Heart right ventricle (tissue), 16 donors: ENCODE measurements at regions of chr13 and their contacts with region 1.

Region 1: GRCh38 chr13:20828539-20829364 is 55.0 kb upstream of the EEF1AKMT1 start:
- DNase-seq: peak in 1 of 2 donors; percentile 52
- ATAC-seq: peak in 6 of 8 donors; percentile 24 to 68 (median 51)
- H3K4me3 ChIP-seq: peak overlapping the region in 7 of 10 donors; percentile 14 to 43 (median 33)
- H3K27ac ChIP-seq: peak overlapping the region in 9 of 10 donors; percentile 1 to 82 (median 66)
- H3K4me1 ChIP-seq: peaks cover 0 to 22% (median 10%) of the 10 kb centered on the region in 9 donors
- H3K27me3 ChIP-seq: no peaks in the 10 kb centered on the region
- CTCF ChIP-seq: peak; percentile 55 to 87 (median 79)

Region 2: DNA sequence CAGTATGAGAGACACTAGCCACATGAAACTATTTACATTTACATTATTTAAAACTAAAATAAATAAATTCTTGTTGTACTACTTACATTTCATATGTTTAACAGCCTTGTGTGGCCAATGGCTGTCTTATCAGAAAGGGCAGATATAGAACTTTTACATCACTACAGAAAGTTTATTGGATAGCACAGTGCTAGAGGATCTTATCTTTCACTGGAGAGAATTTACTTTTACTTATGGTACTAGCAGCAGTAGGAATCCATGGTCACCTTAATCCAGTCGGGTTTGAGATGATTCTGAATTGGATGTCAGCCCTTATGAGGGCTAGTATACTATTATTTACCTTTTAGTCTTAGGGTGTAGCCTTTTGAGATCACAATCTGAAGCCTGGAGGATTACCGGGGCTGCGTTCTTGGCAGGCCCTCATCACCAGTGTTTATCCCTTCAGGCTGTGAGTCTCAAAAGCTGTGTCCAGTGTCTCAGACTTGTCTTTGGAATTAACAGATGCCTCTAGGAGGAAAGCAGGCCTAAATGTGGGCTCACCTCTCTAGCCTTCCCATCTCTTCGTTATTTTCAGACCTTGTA is 240.1 kb before region 1 on chr13:
- intact Hi-C with region 1: no loop called
- DNase-seq: no peak
- ATAC-seq: no peak
- H3K4me3 ChIP-seq: no peak overlapping the region
- H3K27ac ChIP-seq: no peak overlapping the region
- H3K4me1 ChIP-seq: no peaks in the 10 kb centered on the region
- H3K27me3 ChIP-seq: no peaks in the 10 kb centered on the region
- CTCF ChIP-seq: no peak

Region 3: GRCh38 chr13:20760872-20761271 is 67.9 kb before region 1 on chr13:
- intact Hi-C with region 1: no loop called
- DNase-seq: no peak
- ATAC-seq: no peak
- H3K4me3 ChIP-seq: no peak overlapping the region
- H3K27ac ChIP-seq: no peak overlapping the region
- H3K4me1 ChIP-seq: no peaks in the 10 kb centered on the region
- H3K27me3 ChIP-seq: no peaks in the 10 kb centered on the region
- CTCF ChIP-seq: no peak

Region 4: DNA sequence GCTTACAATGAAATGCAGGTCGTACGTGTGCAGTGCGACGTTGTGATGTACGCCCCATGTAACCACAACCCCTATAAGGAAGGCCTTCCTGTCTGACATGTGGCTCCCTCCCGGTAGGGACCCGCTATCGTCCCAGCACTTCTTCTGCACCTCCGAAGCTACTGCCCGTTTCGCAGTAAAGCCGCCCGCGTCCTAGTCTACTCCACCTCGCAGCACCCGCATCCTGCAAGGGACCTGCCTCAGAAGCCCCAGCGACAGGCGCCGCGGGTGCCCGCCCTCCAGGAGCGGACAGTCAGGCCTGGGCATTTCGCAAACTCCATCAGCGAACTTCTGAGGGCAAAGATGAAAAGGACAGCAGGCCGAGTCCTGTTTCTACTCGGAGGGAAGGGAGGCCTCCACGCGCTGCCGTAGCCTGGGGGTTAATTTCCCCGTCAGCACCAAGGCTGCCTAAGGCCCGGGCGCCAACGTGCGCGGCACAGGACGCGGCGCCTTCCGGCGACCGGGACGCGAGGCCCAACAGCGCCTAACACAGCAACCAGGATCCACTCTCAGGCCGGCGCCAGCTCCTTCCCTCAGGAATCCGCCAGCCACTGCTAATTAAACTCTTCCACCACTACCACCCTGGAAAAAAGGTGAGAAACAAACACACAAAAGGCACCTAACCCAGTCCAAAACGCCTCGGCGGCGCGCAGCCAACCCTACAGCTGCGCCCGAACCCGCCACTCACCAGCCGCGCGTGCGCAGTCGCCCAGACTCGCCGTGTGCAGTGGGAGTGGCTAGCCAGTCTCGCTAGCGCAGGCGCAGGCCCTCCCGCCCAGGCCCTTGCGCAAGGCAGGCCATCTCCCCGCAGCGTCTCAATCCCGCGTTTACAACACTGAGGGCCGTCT is 55.3 kb before region 1 on chr13 and contains the start of gene EEF1AKMT1:
- intact Hi-C with region 1: loop called in 1 of 10 experiments (anchors 5 kb)
- DNase-seq: peak; percentile 92 to 97
- ATAC-seq: peak; percentile 97 to 100 (median 99)
- H3K4me3 ChIP-seq: peak within 1 kb of the TSS; percentile 52 to 86 (median 66)
- H3K27ac ChIP-seq: peak within 1 kb of the TSS; percentile 85 to 95 (median 89)
- H3K4me1 ChIP-seq: peaks cover 0 to 15% (median 9%) of the 10 kb centered on the region in 9 donors
- H3K27me3 ChIP-seq: no peaks in the 10 kb centered on the region
- CTCF ChIP-seq: no peak
- total RNA-seq, gene EEF1AKMT1: 6.1 to 9.9 (median 7.9) TPM

Region 5: GRCh38 chr13:20860844-20861243 is 32.1 kb after region 1 on chr13:
- intact Hi-C with region 1: no loop called
- DNase-seq: no peak
- ATAC-seq: no peak
- H3K4me3 ChIP-seq: no peak overlapping the region
- H3K27ac ChIP-seq: no peak overlapping the region
- H3K4me1 ChIP-seq: no peaks in the 10 kb centered on the region
- H3K27me3 ChIP-seq: no peaks in the 10 kb centered on the region
- CTCF ChIP-seq: no peak